ENCODE measurements at regions of chr6 and their contacts with region 1.

Region 1: DNA sequence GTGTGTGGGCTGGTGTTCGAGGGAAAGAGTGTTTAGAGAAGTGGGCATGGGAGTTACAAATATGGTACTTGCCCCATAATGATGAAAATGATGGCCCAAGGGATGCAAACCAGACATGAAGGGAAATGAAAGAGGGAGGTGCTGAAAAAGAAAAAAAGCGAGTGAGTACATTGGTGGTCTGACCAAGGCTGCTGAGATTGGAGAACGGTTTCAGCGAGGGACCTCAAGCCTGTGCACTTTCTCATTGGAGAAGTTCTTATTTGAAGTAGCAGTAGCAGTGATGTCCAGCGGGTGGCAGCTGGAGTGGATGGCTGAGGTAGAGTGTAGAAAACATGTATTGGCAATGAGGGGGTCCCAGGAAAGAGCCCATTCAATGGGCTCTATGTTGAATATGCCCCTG is 54.8 kb downstream of the TNFAIP3 start:
- DNase-seq: no peak
- ATAC-seq: peak; percentile 31
- H3K4me3 Mint-ChIP-seq: no peak overlapping the region
- H3K27ac Mint-ChIP-seq: no peak overlapping the region
- H3K4me1 Mint-ChIP-seq: peaks cover 50% of the 10 kb centered on the region
- H3K27me3 Mint-ChIP-seq: no peaks in the 10 kb centered on the region
- CTCF ChIP-seq: no peak

Region 2: DNA sequence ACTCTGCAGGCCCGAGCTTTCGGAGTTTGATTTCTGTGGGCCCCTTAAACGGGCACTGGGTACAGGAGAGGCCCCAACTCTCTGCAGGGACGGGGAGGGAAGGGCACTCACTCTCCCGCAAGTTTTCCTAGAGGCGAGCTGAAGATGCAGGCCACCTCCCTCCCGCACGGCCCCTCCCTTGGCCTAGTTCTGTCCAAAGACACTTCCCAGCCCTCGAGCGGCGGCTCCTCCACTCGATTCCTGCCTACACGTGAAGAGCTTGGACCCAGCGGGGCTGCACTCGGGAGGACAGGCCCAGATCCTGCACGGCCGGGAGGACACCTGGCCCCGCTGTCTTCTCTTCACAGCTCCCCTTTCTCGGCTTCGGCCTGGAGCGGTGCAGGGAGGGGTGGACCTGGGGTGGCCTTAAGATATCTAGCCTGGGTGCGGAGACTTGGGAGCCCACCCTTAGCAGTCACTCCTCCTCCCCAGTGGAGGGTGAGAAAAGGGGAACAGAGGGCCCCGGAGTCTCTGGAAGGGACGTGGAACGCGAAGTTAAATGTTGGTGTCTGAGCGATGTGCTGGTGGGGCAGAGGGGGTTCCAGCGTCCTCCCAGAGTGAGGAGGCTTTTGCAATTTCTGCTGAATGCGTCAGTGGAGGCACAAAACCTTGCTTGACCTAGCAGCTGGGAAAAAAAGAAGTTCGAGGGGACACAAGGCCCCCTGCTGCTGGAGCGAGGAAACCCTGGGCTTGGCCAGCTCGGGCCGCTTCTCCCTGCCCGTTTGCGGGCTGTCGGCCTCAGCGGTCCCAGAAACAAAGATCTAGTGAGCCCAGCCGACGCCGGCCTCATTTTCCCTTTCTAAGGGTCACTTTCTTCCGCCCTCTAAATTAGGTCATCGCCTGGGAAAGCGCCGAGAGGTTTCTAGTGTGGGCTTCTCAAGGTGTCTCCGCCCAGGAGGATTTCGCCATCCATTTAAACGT is 432.5 kb before region 1 on chr6:
- CTCF ChIA-PET with region 1: no interaction called
- POLR2A ChIA-PET with region 1: no interaction called
- intact Hi-C with region 1: no loop called
- DNase-seq: no peak
- ATAC-seq: peak; percentile 10
- H3K4me3 Mint-ChIP-seq: peak overlapping the region; percentile 33
- H3K27ac Mint-ChIP-seq: no peak overlapping the region
- H3K4me1 Mint-ChIP-seq: peaks cover 47% of the 10 kb centered on the region
- H3K27me3 Mint-ChIP-seq: peaks cover 78% of the 10 kb centered on the region
- CTCF ChIP-seq: no peak

Region 3: DNA sequence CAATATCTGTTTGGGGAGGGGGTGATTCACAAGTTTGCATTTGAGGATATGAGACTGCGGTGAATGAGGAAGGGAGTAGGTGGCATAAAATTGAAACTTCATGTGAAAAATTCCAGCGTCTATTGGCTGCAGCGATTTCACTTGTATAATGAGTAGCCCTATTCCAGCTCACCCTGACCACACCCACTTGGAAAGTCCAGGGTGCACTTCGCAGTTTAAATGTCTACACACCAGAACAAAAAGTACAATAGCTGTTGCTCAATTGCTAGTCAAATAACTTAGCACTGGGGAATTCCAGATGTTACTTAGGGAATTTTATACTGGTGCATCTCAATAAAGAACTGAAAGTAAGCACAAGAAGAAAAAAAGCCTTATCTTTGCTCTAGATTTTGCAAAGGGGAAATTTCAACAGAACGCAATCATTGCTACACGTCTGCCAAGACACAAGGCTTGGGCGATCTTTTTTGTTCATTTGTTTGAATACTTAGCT is 48.5 kb before region 1 on chr6:
- CTCF ChIA-PET with region 1: interaction called, 16 read pairs
- POLR2A ChIA-PET with region 1: interaction called, 36 read pairs
- intact Hi-C with region 1: loop called (anchors 1 kb)
- DNase-seq: peak; percentile 50
- ATAC-seq: peak; percentile 84
- H3K4me3 Mint-ChIP-seq: peak overlapping the region; percentile 96
- H3K27ac Mint-ChIP-seq: peak overlapping the region; percentile 94
- H3K4me1 Mint-ChIP-seq: peaks cover 80% of the 10 kb centered on the region
- H3K27me3 Mint-ChIP-seq: no peaks in the 10 kb centered on the region
- CTCF ChIP-seq: no peak

Region 4: GRCh38 chr6:137911675-137912191 is 10.1 kb before region 1 on chr6:
- CTCF ChIA-PET with region 1: interaction called, 4 read pairs
- POLR2A ChIA-PET with region 1: interaction called, 9 read pairs
- intact Hi-C with region 1: loop called (anchors 1 kb)
- DNase-seq: no peak
- ATAC-seq: peak; percentile 32
- H3K4me3 Mint-ChIP-seq: peak overlapping the region; percentile 48
- H3K27ac Mint-ChIP-seq: no peak overlapping the region
- H3K4me1 Mint-ChIP-seq: peaks cover 63% of the 10 kb centered on the region
- H3K27me3 Mint-ChIP-seq: no peaks in the 10 kb centered on the region
- CTCF ChIP-seq: no peak

Region 5: GRCh38 chr6:137958811-137959565 is 37.2 kb after region 1 on chr6:
- CTCF ChIA-PET with region 1: no interaction called
- POLR2A ChIA-PET with region 1: no interaction called
- intact Hi-C with region 1: no loop called
- DNase-seq: no peak
- ATAC-seq: no peak
- H3K4me3 Mint-ChIP-seq: no peak overlapping the region
- H3K27ac Mint-ChIP-seq: no peak overlapping the region
- H3K4me1 Mint-ChIP-seq: peaks cover 4% of the 10 kb centered on the region
- H3K27me3 Mint-ChIP-seq: no peaks in the 10 kb centered on the region
- CTCF ChIP-seq: no peak

Region 6: DNA sequence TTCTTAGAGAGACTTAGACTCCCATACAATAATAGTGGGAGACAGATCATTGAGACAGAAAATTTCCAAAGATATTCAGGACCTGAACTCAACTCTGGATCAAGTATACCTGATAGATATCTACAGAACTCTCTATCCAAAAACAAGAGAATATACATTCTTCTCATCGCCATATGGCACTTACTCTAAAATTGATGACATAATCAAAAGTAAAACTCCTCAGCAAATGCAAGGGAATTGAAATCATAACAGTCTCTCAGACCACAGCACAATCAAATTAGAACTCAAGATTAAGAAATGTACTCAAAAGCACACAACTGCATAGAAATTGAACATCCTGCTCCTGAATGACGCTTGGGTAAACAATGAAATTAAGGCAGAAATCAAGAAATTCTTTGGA is 156.7 kb after region 1 on chr6:
- CTCF ChIA-PET with region 1: no interaction called
- POLR2A ChIA-PET with region 1: no interaction called
- intact Hi-C with region 1: no loop called
- DNase-seq: no peak
- ATAC-seq: no peak
- H3K4me3 Mint-ChIP-seq: no peak overlapping the region
- H3K27ac Mint-ChIP-seq: no peak overlapping the region
- H3K4me1 Mint-ChIP-seq: no peaks in the 10 kb centered on the region
- H3K27me3 Mint-ChIP-seq: peaks cover 40% of the 10 kb centered on the region
- CTCF ChIP-seq: no peak